ENCODE measurements at regions of chr2 and their contacts with region 1.

Region 1: DNA sequence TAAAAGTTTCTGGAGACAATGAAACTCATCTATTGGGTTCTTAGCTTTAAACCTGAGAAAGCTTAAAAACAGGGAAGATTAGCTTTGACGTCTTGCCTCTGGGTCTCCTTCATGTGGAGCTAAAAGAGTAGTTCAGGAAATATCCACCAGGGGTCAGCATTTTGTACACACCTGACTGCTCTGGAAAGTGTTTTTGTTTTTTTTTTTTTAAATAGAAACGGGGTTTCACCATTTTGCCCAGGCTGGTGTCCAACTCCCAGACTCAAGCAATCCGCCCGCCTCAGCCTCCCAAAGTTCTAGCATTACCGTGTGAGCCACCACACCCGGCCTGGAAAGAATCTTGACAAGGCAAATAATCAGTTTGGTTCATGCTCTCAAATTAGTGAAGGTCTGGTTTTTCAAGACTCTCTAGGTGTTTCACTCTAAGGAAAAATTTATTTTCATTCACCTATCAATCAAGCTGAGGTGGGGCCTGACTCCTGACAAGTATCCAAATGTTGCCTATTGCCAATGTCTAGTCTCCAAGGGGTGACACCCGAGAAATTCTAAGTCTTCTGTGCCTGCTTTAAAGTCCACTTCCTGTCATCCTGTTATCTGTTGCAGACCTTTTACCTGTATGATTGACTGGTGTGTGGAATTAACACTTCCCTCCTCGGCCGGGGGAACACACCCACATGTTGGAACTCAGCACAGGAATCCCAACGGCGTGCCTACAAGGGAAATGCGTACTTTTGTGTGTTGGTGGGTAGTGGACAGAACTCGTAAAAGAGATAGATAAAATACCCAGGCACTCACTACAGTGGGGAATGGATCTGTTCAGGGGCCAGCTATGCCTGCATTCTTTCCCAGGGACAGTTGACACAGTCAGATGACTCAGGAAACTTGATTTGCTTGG is 11.3 kb downstream of the IL1RN start:
- DNase-seq: peak in 9 of 10 donors; percentile 33 to 87 (median 72)
- ATAC-seq: peak; percentile 84 to 87
- H3K4me3 Mint-ChIP-seq: peak overlapping the region; percentile 56 to 76 (median 72)
- H3K27ac Mint-ChIP-seq: peak overlapping the region; percentile 20 to 87 (median 78)
- H3K4me1 Mint-ChIP-seq: peaks cover 11 to 26% (median 23%) of the 10 kb centered on the region in 4 donors
- H3K27me3 Mint-ChIP-seq: no peaks in the 10 kb centered on the region

Region 2: GRCh38 chr2:113173542-113174395 is 35.1 kb after region 1 on chr2 and contains the start of gene PSD4:
- POLR2A ChIA-PET with region 1: interaction called, 45 read pairs
- DNase-seq: peak; percentile 57 to 93 (median 86)
- ATAC-seq: peak; percentile 79 to 85
- H3K4me3 Mint-ChIP-seq: peak within 1 kb of the TSS; percentile 81 to 96 (median 94)
- H3K27ac Mint-ChIP-seq: peak within 1 kb of the TSS; percentile 84 to 97 (median 94)
- H3K4me1 Mint-ChIP-seq: peaks cover 49 to 84% (median 79%) of the 10 kb centered on the region in 4 donors
- H3K27me3 Mint-ChIP-seq: peaks cover 0 to 2% (median 0%) of the 10 kb centered on the region in 5 donors
- polyA plus RNA-seq, gene PSD4: 22.8 to 44.1 (median 29.9) TPM

Region 3: DNA sequence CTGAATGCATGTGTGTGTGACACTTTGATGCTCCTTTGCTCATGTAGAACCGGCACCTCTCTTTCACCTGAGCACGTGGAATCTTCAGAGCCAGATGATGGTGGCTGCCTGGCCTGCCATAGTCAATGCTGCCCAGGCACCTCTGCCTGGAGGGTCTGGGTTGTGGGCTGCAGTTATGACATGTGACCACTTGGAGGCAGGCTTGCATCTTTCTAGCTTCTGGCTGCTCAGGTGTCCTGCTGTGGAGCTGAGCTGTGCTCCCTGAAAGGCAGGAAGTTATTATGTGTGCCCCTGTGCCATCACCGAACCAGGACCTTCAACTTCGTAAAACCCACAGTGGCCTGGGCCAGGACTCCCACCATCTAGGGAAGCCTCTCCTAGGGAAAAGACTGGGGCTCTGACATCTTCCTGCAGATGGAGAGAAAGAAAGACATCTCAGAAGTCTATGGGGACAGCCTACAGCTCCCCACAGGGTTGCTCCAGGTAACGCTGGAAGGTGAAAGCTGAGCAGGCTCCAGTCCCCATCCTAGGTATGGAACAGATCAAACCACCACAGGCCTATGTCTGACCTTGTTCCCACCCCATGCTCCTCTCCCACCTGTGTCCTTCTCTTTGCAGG is 65.3 kb after region 1 on chr2:
- POLR2A ChIA-PET with region 1: interaction called, 41 read pairs
- DNase-seq: peak; percentile 51 to 85 (median 78)
- ATAC-seq: peak; percentile 85 to 91
- H3K4me3 Mint-ChIP-seq: peak overlapping the region in 6 of 10 donors; percentile 32 to 59 (median 49)
- H3K27ac Mint-ChIP-seq: peak overlapping the region; percentile 81 to 94 (median 92)
- H3K4me1 Mint-ChIP-seq: peaks cover 21 to 46% (median 36%) of the 10 kb centered on the region in 4 donors
- H3K27me3 Mint-ChIP-seq: no peaks in the 10 kb centered on the region